ENCODE measurements at regions of chr19 and their contacts with region 1.

Region 1: DNA sequence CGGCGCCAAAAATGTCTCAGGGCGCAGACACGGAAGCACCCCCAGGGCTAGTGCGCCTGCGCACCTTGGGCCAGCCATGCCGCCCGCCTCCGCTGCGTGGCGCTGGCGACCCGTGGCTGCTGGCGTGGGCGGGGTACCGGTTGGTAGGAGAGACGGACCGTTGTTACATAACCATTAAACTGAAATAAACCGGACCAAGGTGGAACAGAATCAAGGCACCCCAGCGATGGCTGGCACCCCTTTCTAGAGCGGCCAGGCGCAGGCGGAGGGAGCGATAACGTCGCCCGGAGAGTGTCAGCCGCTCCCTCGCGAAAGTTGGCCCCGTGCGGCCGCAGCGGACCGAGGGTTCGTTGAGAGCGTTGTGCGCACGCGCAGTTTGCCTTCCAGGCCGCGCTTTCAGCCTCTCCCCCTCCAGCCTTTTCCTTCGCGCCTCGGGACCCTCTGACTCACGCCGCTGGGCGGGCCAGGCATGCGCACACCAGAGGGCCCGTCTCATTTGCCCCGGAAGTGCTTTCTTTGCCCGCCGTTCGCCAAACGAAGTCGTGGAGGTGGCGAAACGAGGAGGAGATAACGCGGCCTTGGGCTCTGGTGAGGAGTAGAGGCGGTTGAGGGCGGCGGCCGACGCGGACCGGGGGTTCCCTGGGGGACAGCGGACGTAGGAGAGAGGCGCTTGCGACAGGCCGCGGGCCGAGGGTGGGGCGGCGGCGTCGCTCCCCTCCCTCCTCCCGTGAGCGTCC is at the starts of genes PLEKHJ1 and SF3A2:
- DNase-seq: peak; percentile 99
- ATAC-seq: peak; percentile 87
- H3K4me3 Mint-ChIP-seq: peak within 1 kb of the TSS; percentile 94
- H3K27ac Mint-ChIP-seq: peak within 1 kb of the TSS; percentile 97
- H3K4me1 Mint-ChIP-seq: peaks cover 52% of the 10 kb centered on the region
- H3K27me3 Mint-ChIP-seq: no peaks in the 10 kb centered on the region
- total RNA-seq, gene PLEKHJ1: 38.4 to 61.8 TPM
- total RNA-seq, gene SF3A2: 146 to 192 TPM

Region 2: GRCh38 chr19:1592755-1593500 is 643.6 kb before region 1 on chr19 and contains the start of gene MBD3:
- CTCF ChIA-PET with region 1: no interaction called
- POLR2A ChIA-PET with region 1: no interaction called
- intact Hi-C with region 1: loop called in 1 of 2 experiments (anchors 1 kb)
- DNase-seq: peak; percentile 93
- ATAC-seq: peak; percentile 85
- H3K4me3 Mint-ChIP-seq: peak within 1 kb of the TSS; percentile 94
- H3K27ac Mint-ChIP-seq: peak within 1 kb of the TSS; percentile 93
- H3K4me1 Mint-ChIP-seq: peaks cover 20% of the 10 kb centered on the region
- H3K27me3 Mint-ChIP-seq: no peaks in the 10 kb centered on the region
- total RNA-seq, gene MBD3: 68.9 to 87.5 TPM

Region 3: GRCh38 chr19:2016041-2016807 is 220.3 kb before region 1 on chr19:
- CTCF ChIA-PET with region 1: no interaction called
- POLR2A ChIA-PET with region 1: no interaction called
- intact Hi-C with region 1: loop called in 1 of 2 experiments (anchors 1 kb)
- DNase-seq: peak; percentile 85
- ATAC-seq: peak; percentile 77
- H3K4me3 Mint-ChIP-seq: peak overlapping the region; percentile 66
- H3K27ac Mint-ChIP-seq: peak overlapping the region; percentile 58
- H3K4me1 Mint-ChIP-seq: peaks cover 21% of the 10 kb centered on the region
- H3K27me3 Mint-ChIP-seq: no peaks in the 10 kb centered on the region

Region 4: GRCh38 chr19:2261438-2262172 is 25.1 kb after region 1 on chr19:
- CTCF ChIA-PET with region 1: interaction called, 52 read pairs
- POLR2A ChIA-PET with region 1: interaction called, 7 read pairs
- intact Hi-C with region 1: loop called (anchors 1 kb)
- DNase-seq: peak; percentile 81
- ATAC-seq: peak; percentile 33
- H3K4me3 Mint-ChIP-seq: no peak overlapping the region
- H3K27ac Mint-ChIP-seq: no peak overlapping the region
- H3K4me1 Mint-ChIP-seq: peaks cover 33% of the 10 kb centered on the region
- H3K27me3 Mint-ChIP-seq: no peaks in the 10 kb centered on the region

Region 5: DNA sequence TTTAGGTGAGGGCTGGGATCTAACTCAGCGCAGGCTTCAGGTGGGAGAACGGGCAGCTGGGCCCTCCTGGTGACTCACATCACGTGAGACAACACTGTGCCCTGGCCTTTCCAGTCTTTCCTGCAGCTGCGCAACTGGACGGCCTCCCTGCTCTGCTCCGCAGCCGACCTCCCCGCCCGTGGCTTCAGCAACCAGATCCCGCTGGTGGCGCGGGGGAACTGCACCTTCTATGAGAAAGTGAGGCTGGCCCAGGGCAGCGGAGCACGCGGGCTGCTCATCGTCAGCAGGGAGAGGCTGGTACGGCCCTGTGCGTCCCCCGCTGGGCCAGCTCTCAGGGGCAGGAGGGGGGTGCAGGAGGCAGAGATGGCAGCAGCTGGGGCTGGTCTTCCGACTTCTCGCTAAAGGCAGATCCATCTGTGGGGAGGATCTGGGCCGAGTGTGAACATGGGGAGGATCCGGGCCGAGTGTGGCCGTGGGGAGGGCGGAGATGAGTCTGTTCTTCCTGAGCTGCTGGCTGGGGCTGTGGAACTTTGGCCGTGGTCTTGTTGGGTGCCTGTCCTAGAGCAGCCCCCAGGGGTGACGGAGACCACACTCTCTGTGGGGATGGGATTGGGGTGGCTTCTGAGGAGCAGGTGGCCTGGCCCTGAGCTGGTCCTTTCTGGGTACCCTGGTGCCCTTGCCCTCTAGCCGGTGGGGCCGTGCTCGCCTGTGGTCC is 101.0 kb after region 1 on chr19:
- CTCF ChIA-PET with region 1: no interaction called
- POLR2A ChIA-PET with region 1: no interaction called
- intact Hi-C with region 1: no loop called
- DNase-seq: peak; percentile 28
- ATAC-seq: peak; percentile 27
- H3K4me3 Mint-ChIP-seq: no peak overlapping the region
- H3K27ac Mint-ChIP-seq: no peak overlapping the region
- H3K4me1 Mint-ChIP-seq: peaks cover 11% of the 10 kb centered on the region
- H3K27me3 Mint-ChIP-seq: no peaks in the 10 kb centered on the region

Region 6: GRCh38 chr19:2427429-2428320 is 191.2 kb after region 1 on chr19 and contains the start of gene TIMM13:
- CTCF ChIA-PET with region 1: no interaction called
- POLR2A ChIA-PET with region 1: no interaction called
- intact Hi-C with region 1: loop called in 1 of 2 experiments (anchors 1 kb)
- DNase-seq: peak; percentile 98
- ATAC-seq: peak; percentile 95
- H3K4me3 Mint-ChIP-seq: peak within 1 kb of the TSS; percentile 86
- H3K27ac Mint-ChIP-seq: peak within 1 kb of the TSS; percentile 96
- H3K4me1 Mint-ChIP-seq: peaks cover 5% of the 10 kb centered on the region
- H3K27me3 Mint-ChIP-seq: no peaks in the 10 kb centered on the region
- total RNA-seq, gene TIMM13: 70.7 to 104 TPM

Region 7: GRCh38 chr19:2739602-2740313 is 503.3 kb after region 1 on chr19 and contains the start of gene SLC39A3:
- CTCF ChIA-PET with region 1: no interaction called
- POLR2A ChIA-PET with region 1: no interaction called
- intact Hi-C with region 1: loop called in 1 of 2 experiments (anchors 5 kb)
- DNase-seq: peak; percentile 99
- ATAC-seq: peak; percentile 100
- H3K4me3 Mint-ChIP-seq: peak within 1 kb of the TSS; percentile 95
- H3K27ac Mint-ChIP-seq: peak within 1 kb of the TSS; percentile 70
- H3K4me1 Mint-ChIP-seq: peaks cover 14% of the 10 kb centered on the region
- H3K27me3 Mint-ChIP-seq: peaks cover 8% of the 10 kb centered on the region
- total RNA-seq, gene SLC39A3: 26.6 to 46.0 TPM